ENCODE measurements at regions of chr11 and their contacts with region 1.

Region 1: GRCh38 chr11:95150946-95151684 is 61.5 kb downstream of the ENDOD1 start:
- DNase-seq: peak; percentile 90
- H3K4me3 ChIP-seq: peak overlapping the region; percentile 46 to 52 (median 50)
- H3K27ac ChIP-seq: peak overlapping the region; percentile 89
- H3K4me1 ChIP-seq: peaks cover 64% of the 10 kb centered on the region
- H3K27me3 ChIP-seq: no peaks in the 10 kb centered on the region
- CTCF ChIP-seq: peak; percentile 78 to 84

Region 2: GRCh38 chr11:94880216-94880615 is 270.9 kb before region 1 on chr11:
- CTCF ChIA-PET with region 1: no interaction called
- dilution Hi-C with region 1: no loop called
- in situ Hi-C with region 1: no loop called
- intact Hi-C with region 1: loop called (anchors 5 kb)
- DNase-seq: peak; percentile 91
- H3K4me3 ChIP-seq: no peak overlapping the region
- H3K27ac ChIP-seq: no peak overlapping the region
- H3K4me1 ChIP-seq: peaks cover 49% of the 10 kb centered on the region
- H3K27me3 ChIP-seq: no peaks in the 10 kb centered on the region
- CTCF ChIP-seq: no peak

Region 3: DNA sequence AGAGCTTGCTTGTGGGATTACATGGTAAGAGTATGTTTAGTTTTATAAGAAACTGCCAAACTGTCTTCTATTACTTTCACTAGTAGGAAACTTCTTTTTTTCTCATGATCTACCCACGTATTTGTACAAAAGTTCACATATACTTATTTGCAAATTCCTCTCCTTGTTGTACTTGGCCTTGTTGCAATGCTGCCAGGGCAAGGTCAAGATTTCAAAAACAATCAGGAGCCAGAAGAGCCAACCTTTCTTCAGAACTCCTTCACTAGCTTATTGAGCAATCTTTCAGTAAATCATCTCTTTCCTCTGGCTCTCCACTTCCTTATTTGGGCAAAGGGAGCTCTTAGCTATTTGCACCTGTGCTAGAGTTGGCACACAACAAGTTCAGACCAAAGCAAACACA is 74.7 kb before region 1 on chr11:
- CTCF ChIA-PET with region 1: interaction called, 3 read pairs
- dilution Hi-C with region 1: no loop called
- in situ Hi-C with region 1: loop called in 1 of 2 experiments (anchors 10 kb)
- intact Hi-C with region 1: no loop called
- DNase-seq: peak; percentile 64
- H3K4me3 ChIP-seq: no peak overlapping the region
- H3K27ac ChIP-seq: no peak overlapping the region
- H3K4me1 ChIP-seq: peaks cover 28% of the 10 kb centered on the region
- H3K27me3 ChIP-seq: no peaks in the 10 kb centered on the region
- CTCF ChIP-seq: no peak

Region 4: GRCh38 chr11:95134491-95134890 is 16.6 kb before region 1 on chr11:
- CTCF ChIA-PET with region 1: interaction called, 3 read pairs
- dilution Hi-C with region 1: no loop called
- in situ Hi-C with region 1: no loop called
- intact Hi-C with region 1: loop called (anchors 1 kb)
- DNase-seq: peak; percentile 99
- H3K4me3 ChIP-seq: no peak overlapping the region
- H3K27ac ChIP-seq: peak overlapping the region; percentile 82
- H3K4me1 ChIP-seq: peaks cover 31% of the 10 kb centered on the region
- H3K27me3 ChIP-seq: no peaks in the 10 kb centered on the region
- CTCF ChIP-seq: no peak

Region 5: DNA sequence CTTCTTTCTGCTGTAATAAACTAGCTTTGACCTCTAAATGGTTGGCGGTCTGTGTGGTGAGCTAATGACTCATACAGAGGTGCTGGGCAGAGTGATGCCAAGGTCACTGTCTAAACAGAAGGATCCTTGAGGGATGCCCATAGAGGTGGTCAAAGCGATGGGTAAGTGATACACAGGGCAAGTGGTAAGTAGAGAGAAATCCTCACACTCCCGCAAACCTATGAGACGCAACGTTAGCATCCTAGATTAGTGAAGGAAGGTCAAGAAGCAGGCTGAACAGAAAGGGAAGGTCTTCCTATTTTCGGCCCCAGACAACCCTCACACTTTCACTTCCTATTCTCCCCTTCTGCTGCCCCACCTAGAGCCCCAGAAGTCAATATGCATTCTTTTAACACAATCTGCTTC is 145.5 kb after region 1 on chr11:
- CTCF ChIA-PET with region 1: no interaction called
- dilution Hi-C with region 1: no loop called
- in situ Hi-C with region 1: no loop called
- intact Hi-C with region 1: no loop called
- DNase-seq: no peak
- H3K4me3 ChIP-seq: no peak overlapping the region
- H3K27ac ChIP-seq: no peak overlapping the region
- H3K4me1 ChIP-seq: peaks cover 4% of the 10 kb centered on the region
- H3K27me3 ChIP-seq: no peaks in the 10 kb centered on the region
- CTCF ChIP-seq: no peak

Region 6: DNA sequence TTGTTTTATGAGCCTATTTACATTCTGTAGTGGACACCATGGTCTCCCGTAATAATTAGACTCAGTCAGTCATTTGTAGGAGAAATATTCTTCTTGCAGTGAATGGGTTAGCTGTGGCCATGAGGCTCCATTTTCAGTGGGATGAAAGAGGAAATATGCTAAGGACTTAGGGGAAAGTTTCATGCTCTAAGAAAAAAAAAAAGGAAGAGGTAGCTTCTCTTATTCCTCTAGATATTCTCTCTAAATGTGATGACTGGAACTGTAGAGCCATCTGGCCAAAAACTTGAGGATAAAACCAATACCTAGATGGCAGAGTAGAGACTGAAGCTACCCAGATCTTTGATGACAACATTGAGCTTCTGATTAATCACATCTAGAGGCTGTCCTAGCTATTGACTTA is 155.7 kb after region 1 on chr11:
- CTCF ChIA-PET with region 1: no interaction called
- dilution Hi-C with region 1: no loop called
- in situ Hi-C with region 1: no loop called
- intact Hi-C with region 1: no loop called
- DNase-seq: no peak
- H3K4me3 ChIP-seq: no peak overlapping the region
- H3K27ac ChIP-seq: no peak overlapping the region
- H3K4me1 ChIP-seq: peaks cover 26% of the 10 kb centered on the region
- H3K27me3 ChIP-seq: no peaks in the 10 kb centered on the region
- CTCF ChIP-seq: no peak

Region 7: GRCh38 chr11:95364324-95365295 is 213.5 kb after region 1 on chr11:
- CTCF ChIA-PET with region 1: no interaction called
- dilution Hi-C with region 1: no loop called
- in situ Hi-C with region 1: no loop called
- intact Hi-C with region 1: no loop called
- DNase-seq: peak; percentile 68
- H3K4me3 ChIP-seq: no peak overlapping the region
- H3K27ac ChIP-seq: no peak overlapping the region
- H3K4me1 ChIP-seq: peaks cover 28% of the 10 kb centered on the region
- H3K27me3 ChIP-seq: no peaks in the 10 kb centered on the region
- CTCF ChIP-seq: no peak

Region 8: GRCh38 chr11:95705485-95706124 is 554.5 kb after region 1 on chr11:
- CTCF ChIA-PET with region 1: interaction called, 16 read pairs
- dilution Hi-C with region 1: loop called (anchors 5 kb)
- in situ Hi-C with region 1: loop called (anchors 5 to 10 kb)
- intact Hi-C with region 1: loop called (anchors 1 kb)
- DNase-seq: peak; percentile 78
- H3K4me3 ChIP-seq: no peak overlapping the region
- H3K27ac ChIP-seq: no peak overlapping the region
- H3K4me1 ChIP-seq: peaks cover 3% of the 10 kb centered on the region
- H3K27me3 ChIP-seq: no peaks in the 10 kb centered on the region
- CTCF ChIP-seq: peak; percentile 99

Region 9: GRCh38 chr11:95835768-95836488 is 684.8 kb after region 1 on chr11:
- CTCF ChIA-PET with region 1: no interaction called
- dilution Hi-C with region 1: no loop called
- in situ Hi-C with region 1: no loop called
- intact Hi-C with region 1: loop called (anchors 1 kb)
- DNase-seq: peak; percentile 81
- H3K4me3 ChIP-seq: no peak overlapping the region
- H3K27ac ChIP-seq: peak overlapping the region; percentile 14
- H3K4me1 ChIP-seq: no peaks in the 10 kb centered on the region
- H3K27me3 ChIP-seq: no peaks in the 10 kb centered on the region
- CTCF ChIP-seq: peak; percentile 93 to 98

Measured in mammary epithelial cell (primary cell).